Gastrocnemius medialis (tissue), 4 donors: ENCODE measurements at regions of chr2 and their contacts with region 1.

Region 1: DNA sequence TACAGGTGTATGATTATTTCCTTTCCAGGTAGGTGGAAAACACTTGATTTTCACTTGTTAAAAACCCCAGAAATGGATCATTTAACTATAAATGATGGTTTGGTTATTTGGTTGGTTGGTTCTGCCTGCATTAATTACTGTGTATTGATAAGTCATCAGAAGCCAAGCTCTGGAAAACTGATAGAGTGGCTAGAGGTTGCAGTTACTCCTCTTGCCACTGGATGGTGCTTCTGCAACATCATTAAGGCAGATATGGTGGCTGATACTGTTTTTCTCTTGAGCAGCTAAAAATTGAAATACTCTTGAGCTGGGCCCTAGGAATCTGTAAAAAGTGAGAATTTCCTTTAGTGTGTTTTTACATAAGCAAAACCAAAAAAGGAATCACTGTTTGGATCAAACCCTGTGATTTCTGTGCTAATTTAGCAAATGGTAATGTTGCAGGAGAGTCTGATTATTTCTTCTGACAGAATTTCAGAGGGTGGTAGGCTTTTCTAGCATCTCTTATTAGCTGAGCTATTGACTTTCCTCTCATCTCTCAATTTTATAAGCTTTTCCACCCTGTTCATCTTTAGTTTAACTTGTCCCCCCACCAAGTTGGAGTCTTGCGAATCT is 54.3 kb downstream of the RAB10 start:
- DNase-seq: no peak
- ATAC-seq: peak; percentile 66 to 69
- H3K4me3 ChIP-seq: no peak overlapping the region
- H3K27ac ChIP-seq: peak overlapping the region; percentile 70 to 84 (median 77)
- H3K4me1 ChIP-seq: peaks cover 39 to 52% of the 10 kb centered on the region in 2 donors
- H3K27me3 ChIP-seq: no peaks in the 10 kb centered on the region
- CTCF ChIP-seq: peak; percentile 70 to 82 (median 76)
- POLR2A ChIP-seq: no peak

Region 2: DNA sequence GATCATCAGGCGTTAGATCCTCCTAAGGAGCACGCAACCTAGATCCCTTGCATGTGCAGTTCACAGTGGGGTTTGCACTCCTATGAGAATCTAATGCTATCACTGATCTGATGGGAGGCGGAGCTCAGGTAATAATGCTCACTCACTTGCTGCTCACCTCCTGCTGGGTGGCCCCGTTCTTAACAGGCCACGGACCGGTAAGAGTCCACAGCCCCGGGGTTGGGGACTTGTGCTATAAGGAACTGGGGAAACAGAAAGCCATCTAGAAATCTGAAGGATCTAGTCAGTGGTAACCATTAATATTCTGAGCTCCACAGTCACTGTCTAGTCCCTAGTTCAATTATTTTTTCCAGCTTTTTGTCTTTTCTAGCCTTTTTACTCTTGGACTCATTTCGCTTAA is 40.0 kb after region 1 on chr2:
- in situ Hi-C with region 1: no loop called
- intact Hi-C with region 1: loop called (anchors 2 kb)
- DNase-seq: no peak
- ATAC-seq: no peak
- H3K4me3 ChIP-seq: peak overlapping the region in 2 of 4 donors; percentile 12 to 21
- H3K27ac ChIP-seq: peak overlapping the region; percentile 77 to 95 (median 86)
- H3K4me1 ChIP-seq: peaks cover 53 to 71% of the 10 kb centered on the region in 2 donors
- H3K27me3 ChIP-seq: no peaks in the 10 kb centered on the region
- CTCF ChIP-seq: no peak
- POLR2A ChIP-seq: no peak

Region 3: GRCh38 chr2:26144953-26145680 is 57.0 kb after region 1 on chr2:
- in situ Hi-C with region 1: loop called in 3 of 4 experiments (anchors 5 to 10 kb)
- intact Hi-C with region 1: loop called (anchors 1 kb)
- DNase-seq: peak in 1 of 2 donors; percentile 49
- ATAC-seq: peak; percentile 57 to 61
- H3K4me3 ChIP-seq: no peak overlapping the region
- H3K27ac ChIP-seq: peak overlapping the region in 1 of 4 donors; percentile 13
- H3K4me1 ChIP-seq: peaks cover 3 to 10% of the 10 kb centered on the region in 2 donors
- H3K27me3 ChIP-seq: no peaks in the 10 kb centered on the region
- CTCF ChIP-seq: peak; percentile 78 to 85 (median 81)
- POLR2A ChIP-seq: no peak